ENCODE measurements at regions of chr5 and their contacts with region 1.

Region 1: GRCh38 chr5:151659001-151659754 is 27.5 kb downstream of the SPARC start:
- DNase-seq: peak; percentile 69
- H3K4me3 ChIP-seq: no peak overlapping the region
- H3K27ac ChIP-seq: no peak overlapping the region
- H3K4me1 ChIP-seq: peaks cover 12% of the 10 kb centered on the region
- CTCF ChIP-seq: peak; percentile 93

Region 2: DNA sequence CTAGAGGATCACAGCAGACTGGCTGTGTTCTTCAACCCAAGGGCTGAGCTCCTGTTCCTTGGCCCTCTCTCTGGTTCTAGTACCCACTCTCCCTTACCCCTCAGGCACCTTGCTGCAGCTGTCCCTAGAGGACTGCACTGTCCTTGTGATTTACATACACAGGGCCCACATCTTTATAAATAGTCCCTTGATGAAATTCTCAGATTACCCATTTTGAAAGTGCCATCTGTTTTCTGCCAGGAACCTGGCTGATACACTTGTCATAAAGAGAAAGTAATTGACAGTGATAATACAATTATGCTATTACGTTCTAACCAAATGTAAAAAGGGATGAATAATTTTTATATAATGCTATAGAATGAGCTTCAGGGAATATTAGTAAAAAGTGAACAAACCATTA is 44.0 kb after region 1 on chr5:
- CTCF ChIA-PET with region 1: interaction called, 5 read pairs
- POLR2A ChIA-PET with region 1: interaction called, 5 read pairs
- intact Hi-C with region 1: loop called (anchors 1 kb)
- DNase-seq: no peak
- H3K4me3 ChIP-seq: no peak overlapping the region
- H3K27ac ChIP-seq: no peak overlapping the region
- H3K4me1 ChIP-seq: no peaks in the 10 kb centered on the region
- CTCF ChIP-seq: no peak

Region 3: GRCh38 chr5:151719228-151720000 is 60.2 kb after region 1 on chr5:
- CTCF ChIA-PET with region 1: interaction called, 3 read pairs
- POLR2A ChIA-PET with region 1: interaction called, 4 read pairs
- intact Hi-C with region 1: loop called (anchors 1 kb)
- DNase-seq: peak; percentile 27
- H3K4me3 ChIP-seq: no peak overlapping the region
- H3K27ac ChIP-seq: no peak overlapping the region
- H3K4me1 ChIP-seq: no peaks in the 10 kb centered on the region
- CTCF ChIP-seq: peak; percentile 73

Region 4: DNA sequence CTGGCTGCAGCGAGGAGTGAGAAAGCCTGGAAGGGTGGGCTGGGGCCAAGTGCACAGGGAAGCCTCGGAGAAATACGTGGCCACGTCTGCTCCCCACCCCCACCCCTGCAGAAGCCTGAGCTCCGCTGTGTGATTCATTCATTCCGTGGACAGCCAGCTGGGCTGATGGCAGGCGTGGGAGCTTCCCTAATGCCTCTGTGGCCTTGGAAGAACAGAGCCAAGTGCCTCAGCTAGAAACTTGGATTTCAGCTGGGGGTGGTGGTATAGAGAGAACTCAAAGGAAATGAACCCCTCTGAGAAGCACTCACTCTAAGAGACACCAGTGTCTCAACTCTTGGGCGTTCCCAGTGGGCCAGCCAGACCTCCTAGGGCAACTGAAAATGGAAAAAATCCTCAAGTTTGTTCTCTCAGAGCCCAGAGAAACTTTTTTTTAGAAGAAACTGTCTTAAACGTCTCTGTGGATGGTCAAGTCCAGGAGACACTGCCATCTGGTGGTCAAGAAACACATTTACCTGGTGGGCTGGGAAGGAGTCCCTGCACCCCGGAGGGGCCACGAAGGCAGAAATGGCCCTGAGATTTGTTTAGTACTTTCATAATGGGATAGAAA is 81.3 kb after region 1 on chr5:
- CTCF ChIA-PET with region 1: interaction called, 4 read pairs
- POLR2A ChIA-PET with region 1: interaction called, 6 read pairs
- intact Hi-C with region 1: loop called (anchors 1 kb)
- DNase-seq: peak; percentile 70
- H3K4me3 ChIP-seq: no peak overlapping the region
- H3K27ac ChIP-seq: no peak overlapping the region
- H3K4me1 ChIP-seq: no peaks in the 10 kb centered on the region
- CTCF ChIP-seq: peak; percentile 96

Region 5: GRCh38 chr5:151771259-151772028 is 112.3 kb after region 1 on chr5 and contains the start of gene G3BP1:
- CTCF ChIA-PET with region 1: no interaction called
- POLR2A ChIA-PET with region 1: interaction called, 3 read pairs
- intact Hi-C with region 1: loop called (anchors 1 kb)
- DNase-seq: peak; percentile 100
- H3K4me3 ChIP-seq: peak within 1 kb of the TSS; percentile 91
- H3K27ac ChIP-seq: peak within 1 kb of the TSS; percentile 87
- H3K4me1 ChIP-seq: peaks cover 37% of the 10 kb centered on the region
- CTCF ChIP-seq: no peak; the same call in 1 of the 2 replicates
- total RNA-seq, gene G3BP1: 163 and 178 TPM in 2 replicates

Measured in OCI-LY7 (cell line).